OCI-LY7 (cell line): ENCODE measurements at regions of chr13 and their contacts with region 1.

Region 1: GRCh38 chr13:67175836-67176459 is 54.2 kb downstream of the PCDH9 start:
- DNase-seq: no peak
- H3K4me3 ChIP-seq: no peak overlapping the region
- H3K27ac ChIP-seq: no peak overlapping the region
- H3K4me1 ChIP-seq: no peaks in the 10 kb centered on the region
- CTCF ChIP-seq: no peak

Region 2: GRCh38 chr13:67192751-67193150 is 16.8 kb after region 1 on chr13:
- CTCF ChIA-PET with region 1: interaction called, 4 read pairs
- POLR2A ChIA-PET with region 1: interaction called, 11 read pairs
- intact Hi-C with region 1: no loop called
- DNase-seq: no peak
- H3K4me3 ChIP-seq: no peak overlapping the region
- H3K27ac ChIP-seq: no peak overlapping the region
- H3K4me1 ChIP-seq: no peaks in the 10 kb centered on the region
- CTCF ChIP-seq: no peak